T-cell (primary cell): ENCODE measurements at regions of chr13 and their contacts with region 1.

Region 1: DNA sequence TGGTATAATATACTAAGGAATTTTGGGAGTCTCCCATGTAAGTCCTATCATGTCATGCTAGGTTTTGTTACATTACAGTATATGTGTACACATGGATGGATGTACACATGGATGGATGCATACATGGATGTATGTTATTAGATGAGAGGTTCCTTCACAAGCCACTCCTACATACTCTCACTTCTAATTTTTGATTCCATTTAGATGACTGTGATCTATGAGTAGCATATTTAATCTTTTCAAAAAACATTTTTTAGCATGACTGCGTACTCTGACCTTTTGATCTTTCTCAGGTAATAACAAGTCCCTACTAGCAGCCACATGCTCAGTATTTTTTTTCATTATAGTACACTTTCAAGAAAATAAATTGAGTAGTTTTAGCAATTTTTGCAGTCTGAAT is 441.8 kb downstream of the SLITRK1 start:
- DNase-seq: no peak
- ATAC-seq: no peak
- H3K4me3 ChIP-seq: no peak overlapping the region
- H3K4me3 Mint-ChIP-seq: no peak overlapping the region
- H3K27ac ChIP-seq: no peak overlapping the region
- H3K27ac Mint-ChIP-seq: no peak overlapping the region
- H3K4me1 ChIP-seq: no peaks in the 10 kb centered on the region
- H3K4me1 Mint-ChIP-seq: no peaks in the 10 kb centered on the region
- H3K27me3 ChIP-seq: no peaks in the 10 kb centered on the region
- H3K27me3 Mint-ChIP-seq: no peaks in the 10 kb centered on the region

Region 2: DNA sequence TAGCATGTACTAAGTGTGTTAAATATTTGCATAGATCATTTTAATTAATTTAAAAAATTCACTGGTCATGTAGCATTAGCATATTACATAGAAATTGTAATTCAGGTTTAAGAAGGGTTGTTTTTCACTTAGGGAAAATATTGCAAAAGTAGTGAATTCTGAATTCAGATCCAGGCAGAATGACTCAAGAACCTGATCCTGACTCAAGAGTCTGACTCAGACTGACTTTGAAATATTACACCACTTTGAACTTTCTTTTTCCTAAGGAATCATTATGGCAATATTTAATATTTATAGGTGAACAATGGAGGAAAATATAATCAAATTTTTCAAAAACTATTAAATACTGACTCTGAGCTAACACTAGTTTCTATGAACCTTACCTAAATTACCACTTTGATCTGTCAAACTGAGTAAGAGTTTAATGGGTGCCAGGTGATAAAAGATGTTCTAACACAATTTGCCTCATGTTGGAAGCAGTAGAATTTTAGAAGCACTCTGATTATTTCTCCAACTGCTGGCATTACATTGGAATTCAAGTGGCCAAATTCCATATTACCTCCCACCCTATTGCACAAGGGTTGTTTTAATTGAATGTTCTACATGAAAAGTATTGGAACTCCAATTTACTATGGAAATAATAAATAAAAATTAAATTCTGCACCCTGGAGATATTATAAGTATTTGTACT is 180.2 kb after region 1 on chr13:
- CTCF ChIA-PET with region 1: no interaction called
- POLR2A ChIA-PET with region 1: interaction called in 1 of 2 experiments, 15 read pairs
- DNase-seq: no peak
- ATAC-seq: no peak
- H3K4me3 ChIP-seq: no peak overlapping the region
- H3K4me3 Mint-ChIP-seq: no peak overlapping the region
- H3K27ac ChIP-seq: no peak overlapping the region
- H3K27ac Mint-ChIP-seq: no peak overlapping the region
- H3K4me1 ChIP-seq: no peaks in the 10 kb centered on the region
- H3K4me1 Mint-ChIP-seq: no peaks in the 10 kb centered on the region
- H3K27me3 ChIP-seq: no peaks in the 10 kb centered on the region
- H3K27me3 Mint-ChIP-seq: no peaks in the 10 kb centered on the region